ENCODE measurements at regions of chr12 and their contacts with region 1.

Region 1: DNA sequence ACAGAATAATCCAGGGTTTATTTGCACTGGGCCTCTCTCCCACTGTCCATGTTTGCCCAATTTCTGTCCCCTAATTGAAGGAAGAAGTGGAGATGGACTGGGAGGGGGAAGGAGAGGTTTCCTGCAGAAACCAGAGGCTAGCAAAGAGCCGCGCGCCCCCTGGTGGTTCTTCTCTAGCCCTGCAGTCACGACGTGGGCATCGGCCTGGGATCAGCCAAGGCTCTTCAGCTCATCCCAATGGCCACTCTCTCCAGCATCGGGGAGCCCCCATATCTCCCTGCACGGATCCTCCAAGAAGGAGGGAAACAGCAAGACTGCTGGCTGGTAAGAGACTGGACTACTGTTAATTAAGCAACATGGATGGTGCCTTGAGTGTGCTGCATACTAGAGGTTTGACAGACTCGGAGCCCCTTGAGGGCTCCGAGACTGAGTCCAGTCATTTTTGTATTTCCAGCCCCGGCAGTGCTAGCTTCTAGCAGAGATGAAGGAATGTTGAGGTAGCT is 18.7 kb downstream of the ZBTB39 start:
- DNase-seq: peak; percentile 96

Region 2: GRCh38 chr12:56763753-56764657 is 223.6 kb before region 1 on chr12:
- intact Hi-C with region 1: loop called (anchors 2 to 5 kb)
- DNase-seq: no peak